Ovary (tissue), 10 donors: ENCODE measurements at regions of chr5 and their contacts with region 1.

Region 1: GRCh38 chr5:37991267-37991902 is 151.5 kb upstream of the GDNF start:
- DNase-seq: peak in 1 of 5 donors; percentile 17
- H3K4me3 ChIP-seq: no peak overlapping the region
- H3K27ac ChIP-seq: no peak overlapping the region
- H3K4me1 ChIP-seq: peaks cover 2% of the 10 kb centered on the region
- H3K27me3 ChIP-seq: no peaks in the 10 kb centered on the region
- CTCF ChIP-seq: no peak
- EP300 ChIP-seq: no peak
- POLR2A ChIP-seq: no peak

Region 2: DNA sequence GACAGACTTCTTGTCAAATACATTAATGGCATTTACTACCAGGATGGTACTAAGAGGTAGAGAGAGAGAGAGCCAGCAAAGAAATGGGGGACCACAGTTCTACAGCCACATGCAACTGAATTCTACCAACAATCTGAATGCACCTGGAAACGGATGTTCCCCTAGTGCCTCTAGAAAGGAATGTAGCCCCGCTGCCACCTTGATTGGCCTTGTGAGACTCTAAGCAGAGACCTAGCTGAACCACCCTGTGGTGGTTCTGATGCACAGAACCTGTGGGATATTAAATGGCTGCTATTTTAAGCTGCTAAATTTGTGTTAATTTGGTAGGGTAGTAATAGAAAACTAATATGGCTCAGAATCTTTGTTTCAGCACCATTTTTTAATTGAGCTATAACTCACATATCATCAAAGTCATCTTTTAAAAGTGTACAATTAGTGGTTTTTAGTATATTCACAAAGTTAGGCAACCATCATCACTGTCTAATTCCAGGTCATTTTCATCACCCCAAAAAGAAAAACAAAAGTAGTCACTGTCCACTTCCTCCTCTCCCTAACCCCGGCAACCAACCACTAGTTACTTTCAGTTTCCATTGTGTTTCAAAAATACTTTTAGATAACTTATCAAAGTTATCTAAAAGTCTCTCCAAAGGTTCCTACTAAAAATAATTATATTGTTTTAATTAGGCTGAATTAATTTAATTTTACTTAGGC is 793.9 kb before region 1 on chr5:
- intact Hi-C with region 1: no loop called
- DNase-seq: no peak
- H3K4me3 ChIP-seq: no peak overlapping the region
- H3K27ac ChIP-seq: no peak overlapping the region
- H3K4me1 ChIP-seq: no peaks in the 10 kb centered on the region
- H3K27me3 ChIP-seq: no peaks in the 10 kb centered on the region
- CTCF ChIP-seq: no peak
- EP300 ChIP-seq: no peak
- POLR2A ChIP-seq: no peak

Region 3: DNA sequence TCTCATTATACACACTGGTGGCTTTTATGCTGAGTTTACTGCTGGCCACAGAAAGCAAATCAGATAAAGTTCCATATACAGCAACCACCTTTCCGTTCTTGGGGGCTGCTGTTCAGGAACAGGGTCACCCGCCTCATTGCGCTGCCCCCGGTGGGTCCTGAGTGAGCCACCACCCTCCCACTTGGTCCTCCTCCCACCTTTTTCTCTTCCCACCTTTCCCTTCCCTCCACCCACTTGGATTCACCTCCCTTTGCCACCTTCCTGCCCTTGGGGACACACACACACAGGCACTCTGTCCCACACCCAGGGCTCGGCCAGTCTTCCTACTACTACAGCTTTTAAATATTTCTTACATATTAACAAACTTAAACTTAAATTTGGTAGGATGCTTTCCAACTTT is 484.7 kb before region 1 on chr5:
- intact Hi-C with region 1: no loop called
- DNase-seq: no peak
- H3K4me3 ChIP-seq: no peak overlapping the region
- H3K27ac ChIP-seq: no peak overlapping the region
- H3K4me1 ChIP-seq: no peaks in the 10 kb centered on the region
- H3K27me3 ChIP-seq: no peaks in the 10 kb centered on the region
- CTCF ChIP-seq: no peak
- EP300 ChIP-seq: no peak
- POLR2A ChIP-seq: no peak

Region 4: DNA sequence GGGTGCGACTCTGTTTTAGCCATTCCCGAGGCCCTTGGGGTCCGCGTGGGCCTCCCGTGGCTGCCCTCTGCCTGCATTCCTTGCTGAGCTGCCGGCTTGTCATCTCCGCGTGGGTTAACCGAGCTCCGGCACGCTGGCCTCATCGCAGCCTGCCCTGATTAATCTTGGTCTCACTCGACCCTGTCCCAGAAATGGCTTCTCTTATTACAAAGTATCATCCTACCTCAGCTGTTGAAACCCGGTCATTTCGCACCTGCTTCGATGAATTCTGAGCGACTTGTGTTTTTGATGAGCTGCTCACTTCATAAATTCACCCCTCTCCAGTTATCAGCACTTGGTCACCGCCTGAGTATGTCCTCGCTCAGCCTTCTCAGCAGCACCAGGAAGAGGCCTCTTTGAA is 143.4 kb after region 1 on chr5:
- intact Hi-C with region 1: loop called in 1 of 4 experiments (anchors 5 kb)
- DNase-seq: no peak
- H3K4me3 ChIP-seq: no peak overlapping the region
- H3K27ac ChIP-seq: no peak overlapping the region
- H3K4me1 ChIP-seq: peaks cover 2% of the 10 kb centered on the region
- H3K27me3 ChIP-seq: no peaks in the 10 kb centered on the region
- CTCF ChIP-seq: no peak
- EP300 ChIP-seq: no peak
- POLR2A ChIP-seq: no peak